Pancreas (tissue), 10 donors: ENCODE measurements at regions of chr16 and their contacts with region 1.

Region 1: DNA sequence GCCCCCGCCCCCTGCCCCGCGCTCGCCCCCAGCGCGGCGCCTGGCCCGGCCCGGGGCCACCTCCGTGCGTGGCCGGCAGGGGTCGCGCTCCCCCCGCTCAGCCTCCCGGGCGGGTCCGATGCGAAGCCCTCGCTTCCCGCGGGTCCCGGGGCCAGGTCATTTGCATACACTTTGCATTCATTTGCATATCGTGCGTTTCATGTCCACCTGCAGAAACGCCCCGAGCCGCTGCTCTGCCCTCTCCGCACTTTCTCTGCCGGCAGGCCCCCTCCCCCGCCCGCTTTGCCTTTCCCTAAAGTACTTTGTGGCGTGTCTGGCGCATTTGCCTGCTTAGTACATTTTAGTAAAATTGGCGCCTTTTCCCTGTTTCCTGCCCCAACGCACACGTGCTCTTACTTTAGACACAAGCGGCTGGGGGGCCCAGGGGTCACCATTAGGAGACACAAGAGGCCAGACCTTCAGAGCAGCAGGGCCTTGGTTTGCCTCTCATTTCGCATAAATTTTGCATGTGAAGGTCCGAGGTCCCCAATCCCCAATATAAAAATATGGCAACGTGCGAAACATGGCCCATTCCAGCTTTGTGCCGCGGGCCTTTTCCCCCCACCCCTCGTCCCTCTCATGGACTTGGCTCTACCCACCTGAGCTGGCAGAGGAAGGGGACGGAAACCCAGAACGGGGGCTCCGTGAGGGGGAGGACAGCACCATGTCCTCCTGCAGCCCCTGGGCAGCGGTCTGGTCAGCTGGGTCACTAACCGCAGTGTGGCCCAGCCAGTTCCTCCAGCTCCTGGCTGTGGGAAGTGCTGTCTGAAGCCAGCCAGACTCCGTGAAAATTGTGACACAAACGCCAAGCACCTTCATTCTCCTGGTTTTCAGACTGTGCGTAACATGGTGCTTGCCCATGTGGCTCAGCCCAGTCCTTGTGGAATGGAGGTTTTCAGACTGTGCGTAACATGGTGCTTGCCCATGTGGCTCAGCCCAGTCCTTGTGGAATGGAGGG is 34.8 kb downstream of the CBFA2T3 start:
- DNase-seq: peak in 5 of 6 donors; percentile 35 to 86 (median 70)
- ATAC-seq: peak; percentile 39 to 57 (median 52)
- H3K4me3 ChIP-seq: peak overlapping the region in 3 of 4 donors; percentile 31 to 66 (median 65)
- H3K27ac ChIP-seq: no peak overlapping the region
- H3K4me1 ChIP-seq: peaks cover 0 to 10% (median 0%) of the 10 kb centered on the region in 3 donors
- H3K27me3 ChIP-seq: no peaks in the 10 kb centered on the region
- CTCF ChIP-seq: peak; percentile 42 to 75 (median 50)

Region 2: DNA sequence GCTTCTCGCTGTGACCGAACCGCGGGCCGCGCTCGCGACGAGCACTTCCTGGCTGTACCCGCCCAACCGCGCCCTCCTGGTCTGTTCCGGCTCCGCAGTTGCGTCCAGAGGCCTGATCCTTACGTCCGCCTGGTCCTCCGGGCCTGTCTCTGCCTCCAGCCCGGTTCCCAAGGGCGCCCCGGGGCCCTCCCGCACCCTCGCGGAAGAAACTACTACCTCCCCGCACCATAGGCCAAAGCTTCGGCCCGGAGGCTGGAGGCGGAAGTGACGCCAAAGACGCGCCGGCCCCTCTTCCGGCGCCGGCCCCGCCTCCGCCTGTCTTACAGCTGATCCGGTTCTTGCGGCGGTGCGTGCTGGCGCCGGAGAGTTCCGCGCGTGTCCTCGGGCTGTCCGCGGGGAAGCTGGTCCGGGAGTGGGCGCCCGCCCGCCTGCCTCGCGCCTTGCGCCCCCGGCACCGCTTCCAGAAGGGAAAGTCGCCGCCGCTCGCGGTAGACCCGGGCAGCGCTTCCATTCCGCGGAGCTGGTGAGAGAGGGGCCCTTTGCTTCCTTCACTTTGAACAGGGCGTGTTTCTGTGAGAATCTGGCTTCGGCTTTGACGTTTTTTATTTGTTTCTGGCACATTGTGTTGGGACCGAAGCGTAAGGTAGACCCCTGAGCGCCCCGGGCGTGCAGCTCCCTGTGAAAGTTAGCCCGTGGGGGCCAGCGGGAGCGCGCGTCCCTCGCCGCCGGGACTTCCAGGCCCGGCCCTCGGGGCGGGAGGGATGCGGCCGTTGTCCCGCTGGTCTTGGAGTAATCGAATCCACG is 275.4 kb after region 1 on chr16 and contains the start of gene ZNF778:
- intact Hi-C with region 1: loop called in 1 of 3 experiments (anchors 10 kb)
- DNase-seq: peak; percentile 77 to 93 (median 80)
- ATAC-seq: peak; percentile 92 to 96 (median 94)
- H3K4me3 ChIP-seq: peak within 1 kb of the TSS; percentile 65 to 97 (median 90)
- H3K27ac ChIP-seq: peak within 1 kb of the TSS; percentile 92 to 95 (median 92)
- H3K4me1 ChIP-seq: peaks cover 0 to 22% (median 5%) of the 10 kb centered on the region in 3 donors
- H3K27me3 ChIP-seq: no peaks in the 10 kb centered on the region
- CTCF ChIP-seq: no peak
- total RNA-seq, gene ZNF778: 4.9 to 10.3 (median 6.3) TPM

Region 3: GRCh38 chr16:89279666-89280481 is 337.7 kb after region 1 on chr16:
- intact Hi-C with region 1: loop called in 1 of 3 experiments (anchors 5 kb)
- DNase-seq: peak in 2 of 6 donors; percentile 25 to 68
- ATAC-seq: peak in 1 of 4 donors; percentile 6
- H3K4me3 ChIP-seq: no peak overlapping the region
- H3K27ac ChIP-seq: no peak overlapping the region
- H3K4me1 ChIP-seq: no peaks in the 10 kb centered on the region
- H3K27me3 ChIP-seq: no peaks in the 10 kb centered on the region
- CTCF ChIP-seq: no peak